PC-9 (cell line): ENCODE measurements at regions of chr7 and their contacts with region 1.

Region 1: DNA sequence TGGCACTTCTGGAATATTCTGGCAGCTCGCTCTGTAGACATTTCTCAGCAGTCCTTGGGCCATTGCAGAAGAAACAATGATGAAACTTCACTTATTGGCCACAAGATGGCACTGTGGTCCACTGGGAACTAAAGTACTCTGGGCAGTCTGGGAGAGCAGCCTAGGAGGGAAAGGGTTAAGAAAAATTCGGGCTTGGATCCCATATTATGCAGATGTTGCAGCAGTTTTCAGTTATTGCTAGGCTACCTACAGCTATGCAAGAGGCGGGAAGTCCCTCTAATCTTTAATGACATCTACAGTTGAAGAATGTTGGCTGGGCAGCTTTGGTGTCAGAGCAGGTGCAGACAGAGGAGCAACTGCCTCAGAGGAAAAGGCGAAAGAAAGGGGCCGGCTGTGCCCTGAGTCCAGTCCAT is 201.7 kb upstream of the PRSS58 start:
- DNase-seq: peak; percentile 82 to 96
- H3K4me3 ChIP-seq: no peak overlapping the region
- H3K27ac ChIP-seq: peak overlapping the region; percentile 45
- H3K4me1 ChIP-seq: peaks cover 26% of the 10 kb centered on the region
- H3K27me3 ChIP-seq: no peaks in the 10 kb centered on the region
- CTCF ChIP-seq: peak; percentile 91

Region 2: DNA sequence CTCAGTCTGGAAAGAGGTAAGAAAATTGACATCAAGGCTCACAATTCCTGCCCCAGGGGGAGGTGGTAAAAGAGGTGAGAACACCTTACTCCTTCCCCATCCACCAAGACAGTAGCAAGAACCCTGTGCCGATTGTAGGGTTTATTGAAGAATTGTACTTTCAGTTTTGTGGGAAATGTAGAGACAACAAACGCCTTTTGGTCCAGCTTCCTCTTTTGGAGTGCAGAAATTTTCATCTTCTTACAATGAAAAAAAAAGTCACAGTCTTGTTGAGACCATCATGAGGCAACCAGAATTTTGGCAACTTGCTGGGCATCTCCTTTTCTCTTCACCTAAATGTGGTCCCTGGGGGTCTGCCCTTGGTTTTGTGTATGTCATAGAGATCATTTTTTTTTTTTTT is 1168.0 kb before region 1 on chr7:
- CTCF ChIA-PET with region 1: no interaction called
- POLR2A ChIA-PET with region 1: no interaction called
- intact Hi-C with region 1: no loop called
- DNase-seq: no peak
- H3K4me3 ChIP-seq: no peak overlapping the region
- H3K27ac ChIP-seq: no peak overlapping the region
- H3K4me1 ChIP-seq: no peaks in the 10 kb centered on the region
- H3K27me3 ChIP-seq: peaks cover 73% of the 10 kb centered on the region
- CTCF ChIP-seq: no peak

Region 3: GRCh38 chr7:142338633-142339501 is 120.7 kb before region 1 on chr7:
- CTCF ChIA-PET with region 1: interaction called, 4 read pairs
- POLR2A ChIA-PET with region 1: no interaction called
- intact Hi-C with region 1: loop called (anchors 1 kb)
- DNase-seq: peak; percentile 61 to 88
- H3K4me3 ChIP-seq: no peak overlapping the region
- H3K27ac ChIP-seq: no peak overlapping the region
- H3K4me1 ChIP-seq: no peaks in the 10 kb centered on the region
- H3K27me3 ChIP-seq: no peaks in the 10 kb centered on the region
- CTCF ChIP-seq: peak; percentile 76

Region 4: DNA sequence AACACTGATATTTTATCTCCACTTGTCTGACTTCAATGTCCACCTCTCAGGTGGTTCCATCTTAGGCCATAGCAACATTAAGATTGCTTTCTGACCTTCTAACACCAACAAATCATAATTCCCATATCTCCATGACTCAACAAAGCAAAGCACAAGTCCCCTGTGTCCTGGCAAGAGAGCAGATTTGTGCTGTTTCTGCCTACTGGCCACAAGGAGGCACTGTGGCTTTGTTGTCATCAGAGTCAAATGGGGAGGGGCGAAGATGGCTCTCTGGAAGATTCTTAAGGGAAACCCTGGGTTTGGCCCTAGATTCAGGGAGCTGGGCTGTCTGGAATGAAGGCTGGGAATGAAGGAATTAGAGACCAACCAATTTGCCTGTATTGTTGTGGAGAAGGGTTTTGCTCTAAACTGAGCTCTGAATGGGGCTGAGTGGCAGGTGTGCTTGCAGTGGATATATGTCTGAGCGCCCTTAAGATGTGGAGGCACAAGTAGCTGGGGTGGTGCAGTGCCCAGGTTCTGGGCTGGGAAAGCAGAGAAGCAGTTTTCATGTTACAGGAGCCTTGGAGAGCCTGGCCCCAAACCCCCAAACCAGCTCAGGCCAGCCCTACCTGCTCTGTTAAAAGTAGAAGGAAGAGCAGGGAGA is 46.9 kb before region 1 on chr7:
- CTCF ChIA-PET with region 1: no interaction called
- POLR2A ChIA-PET with region 1: no interaction called
- intact Hi-C with region 1: loop called (anchors 2 kb)
- DNase-seq: peak; percentile 17 to 62
- H3K4me3 ChIP-seq: no peak overlapping the region
- H3K27ac ChIP-seq: no peak overlapping the region
- H3K4me1 ChIP-seq: no peaks in the 10 kb centered on the region
- H3K27me3 ChIP-seq: no peaks in the 10 kb centered on the region
- CTCF ChIP-seq: peak; percentile 90

Region 5: DNA sequence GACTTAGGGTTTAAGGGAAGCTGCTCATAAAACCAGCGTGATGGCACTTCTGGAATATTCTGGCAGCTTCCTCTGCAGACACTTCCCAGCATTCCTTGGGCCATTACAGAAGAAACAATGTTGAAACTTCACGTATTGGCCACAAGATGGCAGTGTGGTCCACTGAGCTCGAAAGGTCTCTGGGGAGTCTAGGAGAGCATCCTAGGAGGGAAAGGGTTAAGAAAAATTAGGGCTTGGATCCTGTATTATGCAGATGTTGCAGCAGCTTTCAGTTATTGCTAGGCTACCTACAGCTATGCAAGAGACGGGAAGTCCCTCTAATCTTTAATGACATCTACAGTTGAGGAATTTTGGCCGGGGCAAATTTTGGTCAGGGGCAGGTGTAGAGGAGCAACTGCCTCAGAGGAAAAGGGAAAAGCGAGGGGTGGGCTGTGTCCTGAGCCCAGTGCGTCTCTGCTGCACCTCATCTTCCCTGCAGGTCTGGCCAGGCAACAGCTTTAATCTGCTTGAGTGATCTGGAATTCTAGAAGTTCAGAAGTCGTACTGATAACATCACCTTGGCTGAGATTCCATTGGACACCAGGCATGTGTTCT is 19.0 kb after region 1 on chr7:
- CTCF ChIA-PET with region 1: interaction called, 25 read pairs
- POLR2A ChIA-PET with region 1: no interaction called
- intact Hi-C with region 1: loop called (anchors 1 kb)
- DNase-seq: peak; percentile 58 to 74
- H3K4me3 ChIP-seq: no peak overlapping the region
- H3K27ac ChIP-seq: no peak overlapping the region
- H3K4me1 ChIP-seq: peaks cover 16% of the 10 kb centered on the region
- H3K27me3 ChIP-seq: no peaks in the 10 kb centered on the region
- CTCF ChIP-seq: peak; percentile 91

Region 6: DNA sequence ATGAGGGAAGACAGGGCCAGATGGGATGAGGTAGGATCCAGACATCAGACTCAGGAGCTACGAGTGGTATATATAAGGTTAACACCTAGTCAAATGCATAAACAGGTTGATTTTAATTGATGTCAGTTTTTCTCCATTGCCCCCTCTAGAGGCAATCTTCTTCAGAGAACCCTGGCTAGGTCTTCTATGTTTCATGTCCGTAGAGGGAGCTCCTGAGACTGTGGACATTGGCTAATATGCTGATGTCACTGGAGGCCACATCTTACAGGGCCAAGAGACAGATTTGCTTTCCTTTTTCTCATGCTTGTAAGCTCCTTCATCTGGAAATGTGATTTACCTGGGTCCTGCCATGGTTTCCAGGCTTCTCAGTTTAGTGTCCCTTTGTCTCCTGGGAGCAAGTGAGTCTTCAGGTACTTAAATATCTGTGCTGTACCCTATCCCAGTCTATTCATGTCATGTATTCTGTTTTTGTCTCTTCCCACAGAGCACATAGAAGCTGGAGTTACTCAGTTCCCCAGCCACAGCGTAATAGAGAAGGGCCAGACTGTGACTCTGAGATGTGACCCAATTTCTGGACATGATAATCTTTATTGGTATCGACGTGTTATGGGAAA is 128.1 kb after region 1 on chr7:
- CTCF ChIA-PET with region 1: no interaction called
- POLR2A ChIA-PET with region 1: no interaction called
- intact Hi-C with region 1: loop called (anchors 5 kb)
- DNase-seq: peak; percentile 30 to 77
- H3K4me3 ChIP-seq: no peak overlapping the region
- H3K27ac ChIP-seq: 0 out of 2 replicates have a peak overlapping the region, but pooled peaks have one; percentile 27
- H3K4me1 ChIP-seq: peaks cover 26% of the 10 kb centered on the region
- H3K27me3 ChIP-seq: no peaks in the 10 kb centered on the region
- CTCF ChIP-seq: peak; percentile 78

Region 7: DNA sequence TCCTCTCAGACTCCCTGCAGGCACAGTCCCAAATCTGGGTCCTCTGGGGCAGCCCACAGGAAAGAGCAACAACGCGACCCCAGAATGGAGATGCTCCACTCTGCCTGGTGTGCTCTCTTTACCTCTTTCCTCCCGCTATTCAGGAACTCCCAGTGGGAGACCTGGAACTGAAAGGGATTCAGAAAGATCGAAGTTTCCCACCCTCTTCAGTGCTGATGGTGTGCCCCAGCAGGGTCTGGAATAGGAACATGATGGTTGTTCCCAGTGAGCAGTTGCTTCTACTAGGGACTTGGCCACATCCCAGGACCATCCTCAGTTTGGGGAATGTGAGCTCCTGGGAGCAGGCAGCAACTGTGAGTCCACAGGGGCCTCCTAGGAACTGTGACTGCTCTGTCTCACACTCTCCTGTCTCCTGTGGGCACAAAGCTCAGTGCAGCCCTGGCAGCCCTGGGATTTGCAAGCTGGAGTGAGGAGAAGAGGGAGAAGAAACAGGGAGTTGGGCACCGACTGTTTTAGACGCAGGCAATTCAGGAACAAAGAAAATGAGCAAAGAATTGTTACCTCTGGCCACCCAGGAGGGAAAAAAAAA is 610.4 kb after region 1 on chr7:
- CTCF ChIA-PET with region 1: no interaction called
- POLR2A ChIA-PET with region 1: no interaction called
- intact Hi-C with region 1: no loop called
- DNase-seq: no peak
- H3K4me3 ChIP-seq: no peak overlapping the region
- H3K27ac ChIP-seq: no peak overlapping the region
- H3K4me1 ChIP-seq: no peaks in the 10 kb centered on the region
- H3K27me3 ChIP-seq: no peaks in the 10 kb centered on the region
- CTCF ChIP-seq: no peak